CD4-positive, alpha-beta memory T cell (primary cell): ENCODE measurements at regions of chr1 and their contacts with region 1.

Region 1: DNA sequence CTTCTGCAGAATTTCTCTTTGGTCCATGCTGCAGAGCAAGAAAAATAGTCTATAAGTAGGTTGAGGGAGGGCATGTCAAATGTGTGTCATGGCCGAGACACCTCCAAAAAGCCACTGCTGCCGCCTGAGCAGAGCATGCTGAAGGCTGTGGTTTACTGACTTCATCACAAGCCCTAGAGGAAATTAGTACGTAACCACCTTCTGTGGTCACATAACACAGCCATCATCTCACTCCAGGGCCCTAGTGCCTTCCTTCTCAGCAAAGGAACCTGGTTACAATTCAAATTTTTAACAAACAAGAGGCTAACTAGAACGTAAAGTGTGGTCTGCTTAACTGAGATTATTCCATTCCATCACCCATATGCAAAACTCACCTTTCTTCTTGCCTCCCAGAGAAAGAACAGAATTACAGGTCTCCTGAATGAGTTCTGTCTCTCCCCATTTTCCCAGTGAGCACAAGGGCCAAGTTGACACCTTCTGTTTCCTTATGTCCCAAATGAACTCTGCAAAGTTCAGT is at the start of gene PTPN22:
- DNase-seq: peak; percentile 85 to 95 (median 90)
- H3K4me3 ChIP-seq: peak within 1 kb of the TSS; percentile 48 to 71
- H3K4me3 Mint-ChIP-seq: peak within 1 kb of the TSS; percentile 85 to 95 (median 90)
- H3K27ac ChIP-seq: peak within 1 kb of the TSS; percentile 79
- H3K27ac Mint-ChIP-seq: peak within 1 kb of the TSS; percentile 96 to 99 (median 98)
- H3K4me1 ChIP-seq: peaks cover 74% of the 10 kb centered on the region
- H3K4me1 Mint-ChIP-seq: peaks cover 56 to 83% (median 66%) of the 10 kb centered on the region in 4 donors
- H3K27me3 ChIP-seq: no peaks in the 10 kb centered on the region
- H3K27me3 Mint-ChIP-seq: no peaks in the 10 kb centered on the region
- total RNA-seq, gene PTPN22: 32.2 to 33.7 TPM

Region 2: DNA sequence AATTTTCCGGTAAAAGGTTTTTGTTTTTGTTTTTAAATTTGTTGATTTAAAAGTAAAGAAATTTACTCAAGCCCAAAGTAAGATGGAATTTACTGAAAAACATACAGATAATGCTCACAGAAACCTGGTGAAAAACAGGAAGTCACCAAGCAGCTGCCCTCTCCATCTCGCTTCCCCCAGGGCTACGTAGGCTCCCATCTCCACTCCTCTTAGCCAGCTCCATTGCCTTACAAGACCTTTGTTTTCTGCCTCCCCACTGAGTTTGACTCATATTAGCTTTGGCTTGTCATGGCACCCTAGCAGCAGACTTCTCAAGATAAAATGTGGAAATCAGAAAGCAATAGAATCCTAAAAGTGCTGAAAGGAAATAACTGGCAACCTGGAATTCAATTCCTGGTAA is 170.2 kb before region 1 on chr1:
- CTCF ChIA-PET with region 1: no interaction called
- POLR2A ChIA-PET with region 1: no interaction called
- intact Hi-C with region 1: no loop called
- DNase-seq: no peak
- H3K4me3 ChIP-seq: no peak overlapping the region
- H3K4me3 Mint-ChIP-seq: peak overlapping the region in 2 of 8 donors; percentile 14 to 72
- H3K27ac ChIP-seq: no peak overlapping the region
- H3K27ac Mint-ChIP-seq: peak overlapping the region in 2 of 7 donors; percentile 19 to 49
- H3K4me1 ChIP-seq: no peaks in the 10 kb centered on the region
- H3K4me1 Mint-ChIP-seq: peaks cover 6 to 9% (median 7%) of the 10 kb centered on the region in 4 donors
- H3K27me3 ChIP-seq: no peaks in the 10 kb centered on the region
- H3K27me3 Mint-ChIP-seq: no peaks in the 10 kb centered on the region

Region 3: DNA sequence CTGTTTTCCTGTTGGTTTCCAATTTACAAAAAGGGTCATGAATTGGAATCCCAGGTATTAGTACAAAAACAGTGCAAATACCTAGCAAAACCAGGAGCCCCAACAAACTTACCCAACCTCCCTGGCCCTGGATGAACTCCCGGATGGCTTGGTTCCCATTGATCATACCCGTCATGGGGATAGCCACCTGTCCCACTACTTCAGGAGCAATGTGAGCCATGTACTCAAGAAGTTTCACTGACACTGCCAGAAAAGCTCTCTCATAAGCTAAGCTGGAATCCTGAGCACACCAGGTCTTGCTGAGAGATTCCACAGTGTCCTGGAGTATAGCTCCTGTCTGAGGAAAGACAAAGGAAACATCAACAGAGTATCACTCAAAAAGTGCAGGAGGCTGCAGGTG is 10.0 kb after region 1 on chr1:
- CTCF ChIA-PET with region 1: interaction called, 13 read pairs
- POLR2A ChIA-PET with region 1: interaction called, 17 read pairs
- intact Hi-C with region 1: loop called (anchors 1 kb)
- DNase-seq: no peak
- H3K4me3 ChIP-seq: no peak overlapping the region
- H3K4me3 Mint-ChIP-seq: no peak overlapping the region
- H3K27ac ChIP-seq: no peak overlapping the region
- H3K27ac Mint-ChIP-seq: peak overlapping the region in 5 of 7 donors; percentile 22 to 78 (median 66)
- H3K4me1 ChIP-seq: peaks cover 46% of the 10 kb centered on the region
- H3K4me1 Mint-ChIP-seq: peaks cover 36 to 55% (median 42%) of the 10 kb centered on the region in 4 donors
- H3K27me3 ChIP-seq: no peaks in the 10 kb centered on the region
- H3K27me3 Mint-ChIP-seq: no peaks in the 10 kb centered on the region